Right ventricle myocardium inferior (tissue), 1 donor: ENCODE measurements at regions of chr18 and their contacts with region 1.

Region 1: DNA sequence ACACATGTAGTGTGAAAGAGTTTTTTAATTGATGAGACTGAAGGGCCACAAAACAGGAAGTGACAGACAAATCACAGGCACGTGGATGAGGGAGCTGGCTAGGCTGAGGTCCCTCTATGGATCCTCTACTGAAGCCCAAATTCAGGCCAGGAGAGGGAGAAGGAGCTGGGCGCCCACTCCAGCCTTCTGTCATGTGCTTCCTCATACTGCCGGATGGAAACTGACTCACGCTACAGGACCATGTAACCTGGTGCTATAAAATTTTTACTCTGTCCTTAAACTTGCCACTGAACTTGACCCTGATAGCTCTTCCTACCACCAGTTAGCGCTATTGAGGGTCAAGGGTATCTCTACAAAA is 31.3 kb downstream of the PSTPIP2 start:
- DNase-seq: no peak
- ATAC-seq: peak; percentile 23

Region 2: DNA sequence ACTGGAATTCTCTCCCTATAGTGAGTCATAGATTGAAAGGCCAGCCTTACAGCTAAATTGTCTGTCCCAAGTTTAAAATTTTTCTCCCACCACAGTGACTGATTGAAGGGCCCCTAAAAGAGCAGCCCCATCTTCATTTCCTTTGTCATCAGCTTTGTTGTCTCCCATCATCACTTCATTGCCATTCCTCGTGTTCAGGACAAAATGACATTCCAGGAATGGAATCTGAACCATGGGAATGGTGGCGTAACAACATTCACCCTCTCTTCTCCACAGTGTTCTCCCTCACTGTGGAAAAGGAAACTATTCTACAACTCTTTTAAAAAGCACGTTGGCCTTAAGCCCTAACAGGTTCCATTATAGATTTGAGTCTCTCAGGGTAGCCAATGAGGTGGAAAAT is 20.8 kb before region 1 on chr18:
- intact Hi-C with region 1: loop called (anchors 2 kb)
- DNase-seq: no peak
- ATAC-seq: no peak